Heart left ventricle (tissue), 16 donors: ENCODE measurements at regions of chr20 and their contacts with region 1.

Region 1: DNA sequence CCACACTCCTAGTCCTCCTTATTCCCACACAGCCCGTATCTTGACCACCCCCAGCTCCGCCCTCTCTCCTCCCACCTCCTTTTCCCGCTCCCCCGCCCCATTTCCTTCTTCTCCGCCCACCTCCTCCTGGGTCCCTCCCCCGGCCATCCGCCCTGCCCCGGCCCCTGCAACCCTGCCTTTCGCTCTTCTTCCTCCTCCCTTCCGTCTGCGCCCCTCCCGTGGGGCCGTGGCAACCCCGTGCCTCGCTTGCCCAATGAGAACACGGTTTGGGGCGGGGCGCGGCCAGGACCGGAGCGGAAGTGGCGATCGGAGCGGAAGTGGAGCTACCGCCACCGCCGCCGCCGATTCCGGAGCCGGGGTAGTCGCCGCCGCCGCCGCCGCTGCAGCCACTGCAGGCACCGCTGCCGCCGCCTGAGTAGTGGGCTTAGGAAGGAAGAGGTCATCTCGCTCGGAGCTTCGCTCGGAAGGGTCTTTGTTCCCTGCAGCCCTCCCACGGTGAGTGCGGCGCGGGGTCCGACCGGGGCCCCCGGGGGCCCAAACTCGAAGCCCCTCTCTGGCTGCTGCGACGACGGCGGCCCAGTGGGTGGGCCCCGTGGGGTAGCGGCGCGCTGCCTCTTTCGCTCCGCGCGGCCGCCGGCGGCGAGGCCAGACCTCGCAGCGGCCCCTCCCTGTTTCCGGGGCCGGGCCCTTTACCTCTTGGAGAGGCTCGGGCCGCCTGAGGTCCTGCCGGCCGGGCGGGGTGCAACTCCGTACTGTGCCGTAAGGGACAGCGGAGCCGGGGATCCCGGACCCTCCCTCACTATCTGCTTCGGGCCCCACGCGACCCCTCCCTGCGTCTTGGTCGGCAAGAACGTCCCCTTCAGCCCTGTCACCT is at the start of gene YWHAB:
- DNase-seq: peak; percentile 99 to 100 (median 99)
- ATAC-seq: peak; percentile 99 to 100 (median 99)
- H3K4me3 ChIP-seq: peak within 1 kb of the TSS; percentile 77 to 99 (median 95)
- H3K27ac ChIP-seq: peak within 1 kb of the TSS; percentile 91 to 100 (median 98)
- H3K4me1 ChIP-seq: peaks cover 8 to 54% (median 43%) of the 10 kb centered on the region in 12 donors
- H3K27me3 ChIP-seq: no peaks in the 10 kb centered on the region
- CTCF ChIP-seq: peak in 3 of 12 donors; percentile 5 to 39 (median 28)
- POLR2A ChIP-seq: peak; percentile 21 to 71
- total RNA-seq, gene YWHAB: 70.8 to 160 (median 120) TPM

Region 2: GRCh38 chr20:44540834-44541233 is 344.8 kb before region 1 on chr20:
- intact Hi-C with region 1: loop called in 1 of 10 experiments (anchors 10 kb)
- DNase-seq: no peak
- ATAC-seq: peak in 2 of 4 donors; percentile 55 to 68
- H3K4me3 ChIP-seq: no peak overlapping the region
- H3K27ac ChIP-seq: peak overlapping the region in 1 of 12 donors; percentile 67
- H3K4me1 ChIP-seq: peaks cover 0 to 42% (median 35%) of the 10 kb centered on the region in 12 donors
- H3K27me3 ChIP-seq: no peaks in the 10 kb centered on the region
- CTCF ChIP-seq: no peak
- POLR2A ChIP-seq: no peak

Region 3: DNA sequence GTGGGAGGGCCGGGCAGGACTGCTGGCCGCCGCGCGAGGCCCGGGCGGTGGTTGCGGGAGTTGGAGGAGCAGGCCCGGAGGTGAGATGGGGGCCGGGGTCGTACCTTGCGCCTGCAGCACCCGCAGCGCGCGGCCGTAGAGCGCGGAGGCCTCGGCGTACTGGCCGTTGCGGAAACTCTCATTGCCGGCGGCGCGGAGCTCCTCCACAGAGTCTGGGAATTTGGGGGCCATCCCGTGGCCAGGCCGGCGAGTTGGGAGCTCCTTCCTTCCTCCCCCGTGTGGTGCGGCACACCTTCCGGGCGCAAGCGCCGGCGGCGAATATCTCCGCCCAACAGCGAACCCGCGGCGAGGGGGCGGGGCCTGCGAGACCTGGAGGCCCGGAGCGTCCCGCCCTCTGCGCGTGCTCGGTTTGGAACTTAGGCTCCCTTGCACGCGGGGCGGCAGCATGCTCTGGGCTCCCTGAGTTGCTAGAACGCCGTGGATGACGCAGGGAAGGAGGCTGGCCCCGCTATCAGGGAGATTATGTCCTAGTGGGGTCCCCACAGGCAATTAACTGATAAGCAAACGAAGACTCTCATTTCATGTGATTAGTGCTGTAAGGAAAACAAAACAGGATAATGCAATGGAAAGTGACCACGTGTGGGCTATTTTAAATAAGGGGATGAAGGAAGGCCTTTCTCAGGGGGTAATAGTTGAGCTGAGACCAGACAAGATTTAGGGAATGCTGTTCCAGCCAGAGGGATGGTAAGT is 74.6 kb after region 1 on chr20 and contains the start of gene TOMM34:
- intact Hi-C with region 1: loop called in 3 of 10 experiments (anchors 5 kb)
- DNase-seq: peak; percentile 95 to 97 (median 96)
- ATAC-seq: peak; percentile 95 to 99 (median 98)
- H3K4me3 ChIP-seq: peak within 1 kb of the TSS; percentile 66 to 96 (median 88)
- H3K27ac ChIP-seq: peak within 1 kb of the TSS in 11 of 12 donors; percentile 47 to 87 (median 79)
- H3K4me1 ChIP-seq: peaks cover 0 to 26% (median 15%) of the 10 kb centered on the region in 12 donors
- H3K27me3 ChIP-seq: no peaks in the 10 kb centered on the region
- CTCF ChIP-seq: peak in 3 of 12 donors; percentile 6 to 20 (median 19)
- POLR2A ChIP-seq: peak; percentile 27 to 92
- total RNA-seq, gene TOMM34: 6.9 to 15.9 (median 12.7) TPM

Region 4: DNA sequence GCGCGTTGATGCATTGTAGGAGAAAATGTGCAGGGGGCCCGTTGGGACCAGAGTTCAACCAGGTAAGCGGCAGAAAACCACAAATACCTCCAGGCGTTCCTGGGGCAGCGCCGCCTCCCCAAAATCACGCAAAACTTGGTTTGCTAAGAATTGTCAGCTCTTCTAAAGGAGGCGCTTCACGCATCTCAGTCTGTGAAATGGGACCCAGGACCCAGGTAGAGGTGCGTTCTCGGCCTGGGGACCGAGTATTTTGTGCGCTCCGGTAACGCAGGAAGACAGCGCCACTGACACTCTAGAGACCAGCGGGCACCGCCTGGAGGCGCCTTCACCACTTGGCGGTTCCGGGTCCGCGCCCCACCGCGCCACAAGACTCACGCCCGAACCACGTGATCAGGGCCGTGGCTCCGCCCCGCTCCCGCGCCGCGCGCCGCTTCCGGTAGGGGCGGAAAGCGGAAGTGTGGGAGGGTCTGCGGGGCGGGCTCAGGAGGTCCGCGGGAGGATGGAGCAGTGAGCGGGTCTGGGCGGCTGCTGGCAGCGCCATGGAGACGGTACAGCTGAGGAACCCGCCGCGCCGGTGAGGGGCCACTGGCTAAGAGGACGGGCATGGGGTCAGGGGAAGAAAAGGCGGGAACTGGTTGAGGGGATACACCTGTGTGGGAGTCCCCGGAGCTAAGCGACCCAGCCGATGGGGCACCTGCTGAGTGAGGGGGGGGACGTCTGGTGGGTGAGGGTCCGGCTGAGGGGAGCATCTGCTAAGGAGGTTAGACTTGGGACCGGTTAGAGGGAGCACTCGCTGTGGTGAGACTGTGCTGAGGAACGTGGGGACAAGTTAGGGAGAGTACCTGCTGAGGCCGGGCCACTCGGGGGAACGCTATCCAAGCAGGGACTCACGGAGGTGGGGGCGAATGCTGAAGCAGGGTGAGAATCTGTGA is 80.7 kb after region 1 on chr20 and contains the start of gene STK4:
- intact Hi-C with region 1: loop called in 3 of 10 experiments (anchors 5 kb)
- DNase-seq: peak; percentile 94 to 97 (median 94)
- ATAC-seq: peak; percentile 94 to 99 (median 98)
- H3K4me3 ChIP-seq: peak within 1 kb of the TSS; percentile 62 to 93 (median 76)
- H3K27ac ChIP-seq: peak within 1 kb of the TSS in 11 of 12 donors; percentile 71 to 95 (median 85)
- H3K4me1 ChIP-seq: peaks cover 0 to 52% (median 15%) of the 10 kb centered on the region in 12 donors
- H3K27me3 ChIP-seq: no peaks in the 10 kb centered on the region
- CTCF ChIP-seq: peak; percentile 13 to 71 (median 46)
- POLR2A ChIP-seq: peak in 1 of 2 donors; percentile 88
- total RNA-seq, gene STK4: 8.1 to 25.3 (median 9.5) TPM

Region 5: GRCh38 chr20:44990425-44990824 is 104.8 kb after region 1 on chr20:
- intact Hi-C with region 1: no loop called
- DNase-seq: no peak
- ATAC-seq: peak in 2 of 4 donors; percentile 36 to 52
- H3K4me3 ChIP-seq: peak overlapping the region in 7 of 12 donors; percentile 1 to 37 (median 21)
- H3K27ac ChIP-seq: peak overlapping the region in 9 of 12 donors; percentile 16 to 87 (median 41)
- H3K4me1 ChIP-seq: peaks cover 0 to 66% (median 10%) of the 10 kb centered on the region in 12 donors
- H3K27me3 ChIP-seq: no peaks in the 10 kb centered on the region
- CTCF ChIP-seq: no peak
- POLR2A ChIP-seq: no peak

Region 6: DNA sequence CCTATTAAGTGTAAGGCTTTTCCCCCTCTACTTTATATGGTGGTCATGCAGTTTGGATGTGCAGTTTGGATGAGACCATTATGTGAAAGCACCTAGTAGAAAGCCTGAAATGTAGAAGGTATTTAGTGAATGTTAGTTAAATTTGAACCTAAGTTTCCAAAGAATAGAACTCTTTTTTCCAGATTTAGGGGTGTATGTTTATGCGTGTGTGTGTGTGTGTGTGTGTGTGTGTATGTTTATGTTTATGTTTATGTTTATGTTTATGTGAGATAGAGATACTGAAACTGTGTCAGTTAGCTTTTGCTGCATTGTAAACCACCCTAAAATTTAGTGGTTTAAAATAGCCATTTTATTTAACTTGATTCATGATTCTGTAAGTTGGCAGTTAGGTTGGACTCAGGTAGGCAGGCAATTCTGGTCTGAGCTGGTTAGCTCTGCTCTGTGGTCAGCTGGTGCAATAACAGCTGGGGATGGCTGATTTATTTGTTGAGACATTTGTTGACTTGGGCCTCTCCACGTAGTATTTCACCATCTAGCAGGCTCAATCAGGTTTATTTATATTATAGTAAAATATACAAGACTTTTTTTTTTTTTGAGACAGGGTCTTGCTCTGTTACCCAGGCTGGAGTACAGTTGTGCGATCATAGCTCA is 134.7 kb after region 1 on chr20:
- intact Hi-C with region 1: no loop called
- DNase-seq: no peak
- ATAC-seq: no peak
- H3K4me3 ChIP-seq: no peak overlapping the region
- H3K27ac ChIP-seq: no peak overlapping the region
- H3K4me1 ChIP-seq: peaks cover 0 to 48% (median 24%) of the 10 kb centered on the region in 12 donors
- H3K27me3 ChIP-seq: no peaks in the 10 kb centered on the region
- CTCF ChIP-seq: no peak
- POLR2A ChIP-seq: no peak